ENCODE measurements at regions of chr20 and their contacts with region 1.

Region 1: GRCh38 chr20:38893565-38894090 is 32.6 kb upstream of the FAM83D start:
- DNase-seq: peak; percentile 43
- ATAC-seq: peak; percentile 92
- H3K4me3 ChIP-seq: peak overlapping the region in 2 of 3 experiments; percentile 36 to 64; a peak in 3 of 6 replicates
- H3K27ac ChIP-seq: no peak overlapping the region
- H3K4me1 ChIP-seq: peaks cover 12% of the 10 kb centered on the region
- H3K27me3 ChIP-seq: peaks cover 8 to 18% of the 10 kb centered on the region in 2 experiments; a peak in 4 of 5 replicates
- CTCF ChIP-seq: peak; percentile 96
- EP300 ChIP-seq: no peak
- POLR2A ChIP-seq: no peak
- RAD21 ChIP-seq: peak; percentile 94

Region 2: DNA sequence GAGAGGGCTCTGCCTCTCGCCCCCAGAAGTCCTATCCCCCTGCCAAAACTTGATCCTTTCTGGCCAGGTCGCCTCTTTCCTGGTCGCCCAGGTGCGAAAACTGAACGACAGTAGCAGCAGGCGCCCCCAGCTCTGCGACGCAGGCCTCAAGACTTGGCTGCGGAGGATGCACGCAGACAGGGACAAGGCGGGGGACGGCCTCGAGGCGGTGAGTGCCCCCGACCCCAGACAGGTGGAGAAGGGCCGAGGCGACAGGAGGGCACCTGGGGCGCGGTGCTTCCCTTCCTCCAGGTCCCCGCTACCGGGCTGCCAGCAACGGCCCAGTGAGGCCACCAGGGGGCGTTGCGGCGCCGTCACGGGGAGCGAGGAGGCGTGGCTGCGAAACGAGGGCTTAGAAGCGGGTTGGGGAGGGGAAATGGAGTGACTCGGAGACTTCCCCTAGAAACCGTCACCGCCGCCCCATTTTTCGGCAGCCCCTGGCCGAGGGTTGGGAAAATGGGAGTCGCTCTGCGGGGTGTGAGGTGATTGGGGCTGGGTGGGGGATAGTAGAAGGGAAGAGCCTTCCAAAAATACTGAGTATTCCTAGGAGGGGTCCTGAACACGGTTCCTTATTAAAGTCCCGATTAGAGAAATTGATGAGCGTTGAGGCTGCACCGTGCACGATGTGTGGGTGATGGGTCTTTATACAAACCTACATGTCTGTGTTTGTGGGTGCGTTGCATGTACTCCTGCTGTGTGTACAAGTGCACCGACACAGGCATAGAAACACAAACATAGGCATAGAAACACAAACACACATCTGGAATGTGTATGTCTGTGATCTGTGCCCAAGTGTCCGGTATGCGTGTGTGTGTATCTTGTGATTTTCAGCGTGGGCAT is 247.4 kb before region 1 on chr20:
- CTCF ChIA-PET with region 1: interaction called, 8 read pairs
- POLR2A ChIA-PET with region 1: no interaction called
- in situ Hi-C with region 1: loop called (anchors 5 kb)
- intact Hi-C with region 1: loop called (anchors 1 kb)
- DNase-seq: peak; percentile 71
- ATAC-seq: peak; percentile 87
- H3K4me3 ChIP-seq: peak overlapping the region in 1 of 3 experiments; percentile 42; a peak in 1 of 6 replicates
- H3K27ac ChIP-seq: no peak overlapping the region
- H3K4me1 ChIP-seq: peaks cover 25% of the 10 kb centered on the region
- H3K27me3 ChIP-seq: peaks cover 2 to 17% of the 10 kb centered on the region in 2 experiments; a peak in 3 of 5 replicates
- CTCF ChIP-seq: peak; percentile 100
- EP300 ChIP-seq: peak in 1 of 2 experiments; percentile 64; a peak in 1 of 4 replicates
- POLR2A ChIP-seq: no peak
- RAD21 ChIP-seq: peak; percentile 99

Region 3: GRCh38 chr20:38730989-38731737 is 162.5 kb before region 1 on chr20:
- CTCF ChIA-PET with region 1: no interaction called
- POLR2A ChIA-PET with region 1: no interaction called
- in situ Hi-C with region 1: no loop called
- intact Hi-C with region 1: loop called (anchors 5 kb)
- DNase-seq: peak; percentile 62
- ATAC-seq: peak; percentile 85
- H3K4me3 ChIP-seq: peak overlapping the region; percentile 10 to 71 (median 33)
- H3K27ac ChIP-seq: no peak overlapping the region
- H3K4me1 ChIP-seq: peaks cover 15% of the 10 kb centered on the region
- H3K27me3 ChIP-seq: peaks cover 35 to 82% of the 10 kb centered on the region in 2 experiments
- CTCF ChIP-seq: peak; percentile 99
- EP300 ChIP-seq: 0 out of 4 replicates have a peak, but pooled peaks of 1 of the 2 experiments have one; percentile 30
- POLR2A ChIP-seq: no peak
- RAD21 ChIP-seq: peak; percentile 82

Region 4: DNA sequence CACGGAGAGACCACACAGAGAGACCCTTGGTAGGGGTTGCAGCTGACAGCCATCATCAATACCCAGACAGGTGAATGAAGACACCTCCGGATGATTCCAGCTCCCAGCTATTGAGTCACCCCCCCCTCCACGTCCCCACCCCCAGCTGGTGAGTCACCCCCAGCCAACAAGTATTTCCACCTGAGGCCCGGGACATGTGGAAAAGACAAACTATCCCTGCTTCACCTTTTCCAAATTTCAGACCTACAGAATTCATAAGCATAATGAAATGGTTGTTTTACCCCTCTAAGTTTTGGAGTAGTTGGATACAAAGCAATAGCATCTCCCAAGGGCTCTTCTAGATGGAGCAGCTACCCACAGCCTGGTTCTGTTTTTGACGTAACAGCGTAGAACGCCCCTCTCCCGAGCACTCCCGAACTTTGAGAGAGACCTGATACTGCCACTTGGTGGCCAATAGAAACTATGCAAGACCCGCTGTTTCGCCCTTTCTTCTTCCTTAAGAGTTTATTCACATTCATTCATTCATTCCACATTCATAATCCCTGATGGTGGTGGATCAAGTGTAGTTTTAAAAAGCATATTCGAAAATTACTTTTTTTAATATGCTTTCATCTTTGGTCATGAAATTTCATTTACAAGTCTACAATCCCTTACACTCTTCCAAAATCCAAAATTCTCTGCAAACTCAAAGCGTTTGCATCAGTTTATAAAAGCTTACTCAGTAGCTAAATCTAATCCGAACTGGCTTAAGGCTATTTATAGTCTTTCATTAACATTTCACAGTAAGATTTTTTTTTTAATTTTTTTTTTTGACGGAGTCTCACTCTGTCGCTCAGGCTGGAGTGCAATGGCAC is 103.2 kb before region 1 on chr20:
- CTCF ChIA-PET with region 1: no interaction called
- POLR2A ChIA-PET with region 1: no interaction called
- in situ Hi-C with region 1: no loop called
- intact Hi-C with region 1: loop called (anchors 10 kb)
- DNase-seq: peak; percentile 47
- ATAC-seq: peak; percentile 80
- H3K4me3 ChIP-seq: no peak overlapping the region
- H3K27ac ChIP-seq: no peak overlapping the region
- H3K4me1 ChIP-seq: no peaks in the 10 kb centered on the region
- H3K27me3 ChIP-seq: no peaks in the 10 kb centered on the region
- CTCF ChIP-seq: peak; percentile 55
- EP300 ChIP-seq: no peak
- POLR2A ChIP-seq: no peak
- RAD21 ChIP-seq: no peak

Region 5: GRCh38 chr20:38863024-38863851 is 30.4 kb before region 1 on chr20:
- CTCF ChIA-PET with region 1: interaction called, 8 read pairs
- POLR2A ChIA-PET with region 1: no interaction called
- in situ Hi-C with region 1: no loop called
- intact Hi-C with region 1: loop called (anchors 1 kb)
- DNase-seq: no peak
- ATAC-seq: no peak
- H3K4me3 ChIP-seq: no peak overlapping the region
- H3K27ac ChIP-seq: no peak overlapping the region
- H3K4me1 ChIP-seq: peaks cover 13% of the 10 kb centered on the region
- H3K27me3 ChIP-seq: peaks cover 0 to 16% of the 10 kb centered on the region in 2 experiments; a peak in 3 of 5 replicates
- CTCF ChIP-seq: no peak
- EP300 ChIP-seq: no peak
- POLR2A ChIP-seq: no peak
- RAD21 ChIP-seq: no peak